CD14-positive monocyte (primary cell): ENCODE measurements at regions of chr19 and their contacts with region 1.

Region 1: GRCh38 chr19:54916822-54917221 is 10.9 kb downstream of the NCR1 start:
- DNase-seq: peak; percentile 43 to 69 (median 52)
- H3K4me3 ChIP-seq: no peak overlapping the region
- H3K4me3 Mint-ChIP-seq: peak overlapping the region in 1 of 2 donors; percentile 83
- H3K27ac ChIP-seq: no peak overlapping the region
- H3K27ac Mint-ChIP-seq: peak overlapping the region in 6 of 7 donors; percentile 20 to 75 (median 36)
- H3K4me1 ChIP-seq: peaks cover 9 to 13% of the 10 kb centered on the region in 2 donors
- H3K4me1 Mint-ChIP-seq: peaks cover 17% of the 10 kb centered on the region
- H3K27me3 ChIP-seq: peaks cover 0 to 16% of the 10 kb centered on the region in 2 donors
- H3K27me3 Mint-ChIP-seq: peaks cover 20 to 39% (median 38%) of the 10 kb centered on the region in 3 donors
- CTCF ChIP-seq: no peak

Region 2: GRCh38 chr19:54654447-54655321 is 262.1 kb before region 1 on chr19:
- intact Hi-C with region 1: loop called in 1 of 2 experiments (anchors 2 kb)
- DNase-seq: peak in 2 of 3 donors; percentile 65 to 80
- H3K4me3 ChIP-seq: no peak overlapping the region
- H3K4me3 Mint-ChIP-seq: peak overlapping the region in 1 of 2 donors; percentile 23
- H3K27ac ChIP-seq: no peak overlapping the region
- H3K27ac Mint-ChIP-seq: peak overlapping the region in 5 of 7 donors; percentile 1 to 50 (median 43)
- H3K4me1 ChIP-seq: peaks cover 10 to 18% of the 10 kb centered on the region in 2 donors
- H3K4me1 Mint-ChIP-seq: peaks cover 33% of the 10 kb centered on the region
- H3K27me3 ChIP-seq: peaks cover 3 to 6% of the 10 kb centered on the region in 2 donors
- H3K27me3 Mint-ChIP-seq: peaks cover 6 to 12% (median 10%) of the 10 kb centered on the region in 3 donors
- CTCF ChIP-seq: no peak

Region 3: DNA sequence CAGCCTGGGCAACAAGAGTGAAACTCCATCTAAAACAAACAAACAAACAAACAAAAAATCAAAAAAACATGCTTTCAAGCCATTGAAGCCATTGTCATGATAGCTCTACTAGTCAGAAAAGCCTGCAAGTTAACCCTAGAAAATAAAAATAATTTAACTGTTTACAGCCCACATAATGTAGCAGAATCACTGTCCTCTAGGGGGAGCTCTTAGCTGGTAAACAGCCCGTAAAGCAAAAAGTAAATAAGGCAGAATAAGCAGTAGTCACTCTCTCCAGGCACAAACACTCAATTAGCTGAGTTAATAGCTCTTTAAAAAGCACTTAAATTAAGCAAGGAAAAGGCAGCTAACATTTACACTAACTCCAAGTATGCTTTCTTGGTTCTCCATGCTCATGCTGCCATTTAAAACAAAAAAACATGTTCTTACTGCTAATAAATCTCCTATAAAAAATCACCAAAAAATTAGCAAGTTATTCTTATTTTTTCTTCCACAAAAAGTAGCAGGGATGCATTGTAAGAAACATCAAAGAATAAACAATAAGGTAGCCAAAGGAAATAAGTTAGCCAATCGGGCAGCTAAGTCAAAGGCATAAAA is 242.7 kb before region 1 on chr19:
- intact Hi-C with region 1: loop called in 1 of 2 experiments (anchors 10 kb)
- DNase-seq: peak; percentile 49 to 61 (median 61)
- H3K4me3 ChIP-seq: no peak overlapping the region
- H3K4me3 Mint-ChIP-seq: no peak overlapping the region
- H3K27ac ChIP-seq: no peak overlapping the region
- H3K27ac Mint-ChIP-seq: no peak overlapping the region
- H3K4me1 ChIP-seq: peaks cover 26 to 51% of the 10 kb centered on the region in 2 donors
- H3K4me1 Mint-ChIP-seq: peaks cover 47% of the 10 kb centered on the region
- H3K27me3 ChIP-seq: peaks cover 12 to 22% of the 10 kb centered on the region in 2 donors
- H3K27me3 Mint-ChIP-seq: peaks cover 19 to 22% (median 19%) of the 10 kb centered on the region in 3 donors
- CTCF ChIP-seq: peak; percentile 94

Region 4: GRCh38 chr19:54882758-54883157 is 34.1 kb before region 1 on chr19:
- intact Hi-C with region 1: loop called in 1 of 2 experiments (anchors 5 kb)
- DNase-seq: peak in 1 of 3 donors; percentile 47
- H3K4me3 ChIP-seq: no peak overlapping the region
- H3K4me3 Mint-ChIP-seq: peak overlapping the region in 1 of 2 donors; percentile 46
- H3K27ac ChIP-seq: no peak overlapping the region
- H3K27ac Mint-ChIP-seq: peak overlapping the region in 6 of 7 donors; percentile 2 to 69 (median 48)
- H3K4me1 ChIP-seq: peaks cover 34 to 52% of the 10 kb centered on the region in 2 donors
- H3K4me1 Mint-ChIP-seq: peaks cover 49% of the 10 kb centered on the region
- H3K27me3 ChIP-seq: no peaks in the 10 kb centered on the region
- H3K27me3 Mint-ChIP-seq: peaks cover 2 to 15% (median 13%) of the 10 kb centered on the region in 3 donors
- CTCF ChIP-seq: peak; percentile 33

Region 5: DNA sequence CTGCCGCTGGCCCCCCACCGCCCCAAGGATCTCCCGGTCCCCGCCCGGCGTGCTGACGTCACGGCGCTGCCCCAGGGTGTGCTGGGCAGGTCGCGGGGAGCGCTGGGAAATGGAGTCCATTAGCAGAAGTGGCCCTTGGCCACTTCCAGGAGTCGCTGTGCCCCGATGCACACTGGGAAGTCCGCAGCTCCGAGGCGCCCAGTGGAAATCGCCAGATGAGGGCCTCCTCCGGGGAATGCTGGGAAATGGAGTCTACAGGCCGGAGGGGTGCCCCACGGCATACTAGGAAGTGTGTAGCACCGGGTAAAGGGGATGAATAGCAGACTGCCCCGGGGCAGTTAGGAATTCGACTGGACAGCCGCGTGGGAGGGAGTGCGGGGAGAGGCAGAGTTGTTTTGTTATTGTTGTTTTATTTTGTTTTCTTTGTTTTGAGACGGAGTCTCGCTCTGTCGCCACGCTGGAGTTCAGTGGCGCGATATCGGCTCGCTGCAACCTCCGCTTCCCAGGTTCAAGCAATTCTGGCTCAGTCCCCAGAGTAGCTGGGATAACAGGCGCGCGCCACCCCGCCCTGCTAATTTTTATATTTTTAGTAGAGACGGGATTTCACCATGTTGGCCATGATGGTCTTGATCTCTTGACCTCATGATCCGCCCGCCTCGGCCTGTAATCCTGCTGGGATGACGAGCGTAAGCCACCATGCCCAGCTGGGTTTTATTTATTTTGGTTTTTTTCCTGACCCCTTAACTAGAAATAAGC is 201.0 kb after region 1 on chr19 and contains the start of gene PPP1R12C:
- intact Hi-C with region 1: no loop called
- DNase-seq: peak; percentile 97 to 98 (median 97)
- H3K4me3 ChIP-seq: peak within 1 kb of the TSS; percentile 81 to 94 (median 90)
- H3K4me3 Mint-ChIP-seq: peak within 1 kb of the TSS; percentile 95 to 100
- H3K27ac ChIP-seq: peak within 1 kb of the TSS; percentile 80 to 84
- H3K27ac Mint-ChIP-seq: peak within 1 kb of the TSS; percentile 97 to 99 (median 97)
- H3K4me1 ChIP-seq: peaks cover 25 to 52% of the 10 kb centered on the region in 2 donors
- H3K4me1 Mint-ChIP-seq: peaks cover 45% of the 10 kb centered on the region
- H3K27me3 ChIP-seq: peaks cover 0 to 3% of the 10 kb centered on the region in 2 donors
- H3K27me3 Mint-ChIP-seq: peaks cover 6 to 19% (median 14%) of the 10 kb centered on the region in 3 donors
- CTCF ChIP-seq: no peak
- polyA plus RNA-seq, gene PPP1R12C: 2.1 to 206 (median 2.6) TPM

Region 6: DNA sequence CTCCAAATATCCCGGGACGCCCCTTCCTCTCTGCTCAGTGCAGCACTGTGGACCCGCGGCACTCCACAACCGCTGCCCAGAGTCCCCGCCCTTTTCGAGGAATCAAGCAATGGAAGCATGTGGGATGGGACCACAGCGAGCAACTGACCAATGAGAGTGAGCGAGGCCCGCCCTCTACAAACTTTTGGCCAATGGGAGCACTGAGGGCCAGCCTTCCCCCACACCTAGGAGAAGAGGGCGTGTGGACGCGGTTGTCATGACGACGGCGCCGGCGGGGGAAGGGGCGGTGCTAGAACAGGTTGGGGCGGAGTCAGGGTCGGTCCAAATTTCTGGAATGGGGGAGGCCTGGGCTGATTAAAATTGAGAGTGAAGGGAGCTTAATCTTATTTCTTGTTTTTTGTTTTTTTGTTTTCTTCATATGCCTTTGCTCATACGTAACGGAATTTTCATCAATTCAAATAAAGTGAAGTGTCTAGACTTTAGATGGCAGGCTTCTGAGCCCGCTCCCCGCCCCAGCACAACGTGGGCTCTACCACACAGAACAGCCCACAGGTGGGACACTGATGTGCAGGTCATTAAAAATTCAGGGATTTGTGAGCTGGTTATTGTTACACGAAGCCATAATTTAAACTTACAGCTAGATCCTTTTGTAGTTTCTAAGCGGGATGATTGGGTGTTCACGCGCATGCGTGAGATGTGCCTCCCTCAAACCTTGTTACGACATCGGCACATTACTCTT is 249.9 kb after region 1 on chr19 and contains the start of gene DNAAF3:
- intact Hi-C with region 1: no loop called
- DNase-seq: peak; percentile 64 to 80 (median 70)
- H3K4me3 ChIP-seq: peak within 1 kb of the TSS in 1 of 3 experiments; percentile 55
- H3K4me3 Mint-ChIP-seq: peak within 1 kb of the TSS; percentile 60 to 92
- H3K27ac ChIP-seq: no peak within 1 kb of the TSS
- H3K27ac Mint-ChIP-seq: peak within 1 kb of the TSS in 3 of 7 donors; percentile 5 to 47 (median 41)
- H3K4me1 ChIP-seq: peaks cover 15 to 18% of the 10 kb centered on the region in 2 donors
- H3K4me1 Mint-ChIP-seq: peaks cover 12% of the 10 kb centered on the region
- H3K27me3 ChIP-seq: peaks cover 13 to 73% of the 10 kb centered on the region in 2 donors
- H3K27me3 Mint-ChIP-seq: peaks cover 65 to 89% (median 87%) of the 10 kb centered on the region in 3 donors
- CTCF ChIP-seq: no peak
- polyA plus RNA-seq, gene DNAAF3: 0.19 TPM in 1 of 3 donors, not detected in the others